ENCODE measurements at regions of chr10 and their contacts with region 1.

Region 1: GRCh38 chr10:18214691-18215563 is 74.7 kb downstream of the CACNB2 start:
- DNase-seq: peak in 1 of 2 donors; percentile 34
- H3K4me3 ChIP-seq: no peak overlapping the region
- CTCF ChIP-seq: no peak
- POLR2A ChIP-seq: no peak

Region 2: GRCh38 chr10:17910125-17910789 is 304.7 kb before region 1 on chr10:
- intact Hi-C with region 1: loop called (anchors 10 kb)
- DNase-seq: peak in 1 of 2 donors; percentile 29
- H3K4me3 ChIP-seq: no peak overlapping the region
- CTCF ChIP-seq: no peak
- POLR2A ChIP-seq: no peak

Region 3: GRCh38 chr10:18164748-18165361 is 50.1 kb before region 1 on chr10:
- intact Hi-C with region 1: loop called (anchors 2 kb)
- DNase-seq: no peak
- H3K4me3 ChIP-seq: no peak overlapping the region
- CTCF ChIP-seq: no peak
- POLR2A ChIP-seq: no peak

Measured in lower leg skin (tissue), 4 donors.